ENCODE measurements at regions of chr15 and their contacts with region 1.

Region 1: DNA sequence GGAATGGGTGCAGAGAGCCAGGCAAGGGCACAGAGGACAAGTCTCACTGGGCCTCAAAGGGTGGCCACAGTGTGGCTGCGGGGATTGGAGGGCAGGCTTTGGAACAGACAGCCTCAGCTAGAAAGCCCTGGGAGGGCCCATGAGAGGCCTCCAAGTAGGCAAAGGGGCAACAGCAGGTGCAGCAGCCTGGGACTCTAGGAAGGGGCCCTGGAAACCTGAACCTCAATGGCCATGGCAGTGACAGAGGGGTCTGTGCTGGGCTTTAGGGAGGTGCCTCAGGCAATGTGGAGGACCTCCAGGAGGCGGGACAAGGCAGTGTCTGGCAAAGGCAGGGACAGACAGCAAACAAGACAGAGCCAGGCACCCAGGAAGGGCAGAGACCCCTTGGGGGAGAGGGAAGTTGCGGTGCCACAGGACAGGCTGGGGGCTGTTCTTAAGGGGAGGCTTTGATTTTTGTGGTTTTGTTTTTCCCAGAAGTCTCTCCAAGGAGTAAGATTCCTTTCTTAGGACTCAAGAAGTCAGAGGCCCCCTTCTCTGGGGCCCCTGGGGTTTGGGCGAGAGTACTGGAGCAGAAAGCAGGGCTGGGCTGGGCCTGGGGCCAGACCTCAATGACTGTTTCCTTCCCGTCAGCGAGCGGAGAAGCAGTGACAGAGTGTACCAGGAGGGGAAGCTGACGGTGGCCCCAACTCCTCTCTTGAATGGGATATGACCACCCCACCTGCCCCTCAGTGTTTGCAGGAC is 9.7 kb downstream of the STOML1 start:
- DNase-seq: peak; percentile 78
- H3K4me3 ChIP-seq: no peak overlapping the region
- H3K27ac ChIP-seq: peak overlapping the region; percentile 69 to 86
- H3K4me1 ChIP-seq: peaks cover 42% of the 10 kb centered on the region
- H3K27me3 ChIP-seq: no peaks in the 10 kb centered on the region
- CTCF ChIP-seq: no peak
- POLR2A ChIP-seq: no peak

Region 2: GRCh38 chr15:74036271-74037170 is 54.1 kb after region 1 on chr15:
- intact Hi-C with region 1: loop called (anchors 10 kb)
- DNase-seq: peak; percentile 83
- H3K4me3 ChIP-seq: no peak overlapping the region
- H3K27ac ChIP-seq: no peak overlapping the region
- H3K4me1 ChIP-seq: peaks cover 28% of the 10 kb centered on the region
- H3K27me3 ChIP-seq: no peaks in the 10 kb centered on the region
- CTCF ChIP-seq: peak; percentile 36 to 52 (median 43)
- POLR2A ChIP-seq: no peak

Region 3: DNA sequence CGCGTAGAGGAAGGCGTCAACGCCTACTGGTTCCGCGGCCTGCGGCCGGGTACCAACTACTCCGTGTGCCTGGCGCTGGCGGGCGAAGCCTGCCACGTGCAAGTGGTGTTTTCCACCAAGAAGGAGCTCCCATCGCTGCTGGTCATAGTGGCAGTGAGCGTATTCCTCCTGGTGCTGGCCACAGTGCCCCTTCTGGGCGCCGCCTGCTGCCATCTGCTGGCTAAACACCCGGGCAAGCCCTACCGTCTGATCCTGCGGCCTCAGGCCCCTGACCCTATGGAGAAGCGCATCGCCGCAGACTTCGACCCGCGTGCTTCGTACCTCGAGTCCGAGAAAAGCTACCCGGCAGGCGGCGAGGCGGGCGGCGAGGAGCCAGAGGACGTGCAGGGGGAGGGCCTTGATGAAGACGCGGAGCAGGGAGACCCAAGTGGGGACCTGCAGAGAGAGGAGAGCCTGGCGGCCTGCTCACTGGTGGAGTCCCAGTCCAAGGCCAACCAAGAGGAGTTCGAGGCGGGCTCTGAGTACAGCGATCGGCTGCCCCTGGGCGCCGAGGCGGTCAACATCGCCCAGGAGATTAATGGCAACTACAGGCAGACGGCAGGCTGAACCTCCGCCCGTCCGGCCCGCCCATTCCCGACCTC is 152.1 kb after region 1 on chr15:
- intact Hi-C with region 1: loop called (anchors 10 kb)
- DNase-seq: peak; percentile 60
- H3K4me3 ChIP-seq: no peak overlapping the region
- H3K27ac ChIP-seq: no peak overlapping the region
- H3K4me1 ChIP-seq: peaks cover 25% of the 10 kb centered on the region
- H3K27me3 ChIP-seq: no peaks in the 10 kb centered on the region
- CTCF ChIP-seq: peak; percentile 20 to 43 (median 38)
- POLR2A ChIP-seq: no peak

Measured in testis (tissue), 5 donors.